ENCODE measurements at regions of chr19 and their contacts with region 1.

Region 1: DNA sequence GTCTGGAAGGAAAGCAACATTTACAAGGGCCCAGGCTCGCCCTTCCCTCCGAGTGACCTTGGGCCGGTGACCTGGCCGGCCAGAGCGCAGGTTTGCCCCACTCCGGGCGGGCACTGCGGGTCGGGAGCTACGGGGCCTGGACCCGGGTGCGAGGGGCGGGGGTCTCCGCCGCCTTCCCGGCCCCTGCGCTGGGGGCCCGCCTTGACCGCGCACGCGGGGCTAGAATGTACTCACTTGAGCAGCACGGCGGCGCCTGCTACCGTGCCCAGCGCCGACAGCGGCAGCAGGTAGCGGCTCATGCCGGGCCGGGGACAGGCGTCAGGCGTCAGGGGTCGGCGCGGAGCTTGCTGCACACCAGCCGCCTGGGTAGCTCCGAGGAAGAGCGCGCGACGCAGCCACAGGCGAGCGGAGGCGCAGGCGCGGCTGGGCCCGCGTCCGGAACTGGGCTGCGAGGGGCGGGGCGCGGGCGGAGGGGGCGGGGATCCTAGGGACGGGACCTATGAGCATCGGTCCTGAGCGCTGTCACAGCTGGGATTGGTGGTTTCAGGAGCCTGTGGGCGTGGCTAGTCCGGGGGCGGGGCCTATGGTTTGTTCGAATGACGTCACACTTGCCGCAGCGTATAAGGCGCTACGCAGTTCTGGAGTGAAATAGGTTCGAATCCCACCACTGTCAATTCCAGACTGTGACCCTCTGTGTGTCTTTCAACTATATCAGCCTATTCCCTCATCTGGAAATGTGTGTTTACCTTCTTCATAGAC is at the start of gene RDH13:
- DNase-seq: peak; percentile 90
- H3K4me3 ChIP-seq: peak within 1 kb of the TSS; percentile 88 to 90 (median 90)
- H3K27ac ChIP-seq: peak within 1 kb of the TSS; percentile 41
- H3K4me1 ChIP-seq: peaks cover 2% of the 10 kb centered on the region
- H3K27me3 ChIP-seq: no peaks in the 10 kb centered on the region
- CTCF ChIP-seq: no peak
- total RNA-seq, gene RDH13: 18.0 to 19.8 TPM

Region 2: DNA sequence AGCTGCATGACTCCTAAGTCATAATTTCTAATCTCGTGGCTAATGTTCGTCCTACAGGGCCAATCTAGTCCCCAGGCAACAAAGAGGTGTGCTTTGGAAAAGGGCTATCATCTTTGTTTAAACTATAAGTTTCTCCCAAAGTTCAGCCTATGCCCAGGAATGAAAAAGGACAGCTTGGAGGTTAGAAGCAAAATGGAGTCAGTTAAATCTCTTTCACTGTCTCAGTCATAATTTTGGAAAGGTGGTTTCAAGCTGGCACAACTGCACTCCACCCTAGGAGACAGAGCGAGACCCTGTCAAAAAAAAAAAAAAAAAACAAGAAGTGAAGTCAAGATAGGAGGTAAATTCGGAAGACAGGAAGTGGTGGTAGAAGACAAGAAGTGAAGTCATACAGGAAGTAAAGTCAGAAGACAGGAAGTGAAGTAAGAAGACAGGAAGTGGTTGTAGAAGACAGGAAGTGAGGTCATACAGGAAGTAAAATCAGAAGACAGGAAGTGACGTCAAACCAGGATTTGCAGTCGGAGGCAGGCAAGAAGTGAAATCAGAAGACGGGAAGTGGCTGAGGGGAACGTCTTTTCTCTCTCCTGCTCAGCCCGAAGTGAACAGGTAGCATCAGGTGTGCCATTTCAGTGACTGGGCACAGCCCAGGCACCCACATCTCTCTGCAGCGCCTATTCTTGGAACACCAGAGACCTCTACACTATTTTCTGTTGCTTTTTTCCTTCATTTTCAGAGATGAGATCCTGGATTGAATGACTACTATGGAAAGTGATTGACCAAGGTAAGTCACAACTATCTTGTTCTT is 57.0 kb before region 1 on chr19:
- CTCF ChIA-PET with region 1: no interaction called
- dilution Hi-C with region 1: no loop called
- in situ Hi-C with region 1: no loop called
- intact Hi-C with region 1: loop called (anchors 5 kb)
- DNase-seq: peak; percentile 87
- H3K4me3 ChIP-seq: no peak overlapping the region
- H3K27ac ChIP-seq: no peak overlapping the region
- H3K4me1 ChIP-seq: no peaks in the 10 kb centered on the region
- H3K27me3 ChIP-seq: no peaks in the 10 kb centered on the region
- CTCF ChIP-seq: no peak

Measured in mammary epithelial cell (primary cell).